Posterior vena cava (tissue), 2 donors: ENCODE measurements at regions of chr12 and their contacts with region 1.

Region 1: DNA sequence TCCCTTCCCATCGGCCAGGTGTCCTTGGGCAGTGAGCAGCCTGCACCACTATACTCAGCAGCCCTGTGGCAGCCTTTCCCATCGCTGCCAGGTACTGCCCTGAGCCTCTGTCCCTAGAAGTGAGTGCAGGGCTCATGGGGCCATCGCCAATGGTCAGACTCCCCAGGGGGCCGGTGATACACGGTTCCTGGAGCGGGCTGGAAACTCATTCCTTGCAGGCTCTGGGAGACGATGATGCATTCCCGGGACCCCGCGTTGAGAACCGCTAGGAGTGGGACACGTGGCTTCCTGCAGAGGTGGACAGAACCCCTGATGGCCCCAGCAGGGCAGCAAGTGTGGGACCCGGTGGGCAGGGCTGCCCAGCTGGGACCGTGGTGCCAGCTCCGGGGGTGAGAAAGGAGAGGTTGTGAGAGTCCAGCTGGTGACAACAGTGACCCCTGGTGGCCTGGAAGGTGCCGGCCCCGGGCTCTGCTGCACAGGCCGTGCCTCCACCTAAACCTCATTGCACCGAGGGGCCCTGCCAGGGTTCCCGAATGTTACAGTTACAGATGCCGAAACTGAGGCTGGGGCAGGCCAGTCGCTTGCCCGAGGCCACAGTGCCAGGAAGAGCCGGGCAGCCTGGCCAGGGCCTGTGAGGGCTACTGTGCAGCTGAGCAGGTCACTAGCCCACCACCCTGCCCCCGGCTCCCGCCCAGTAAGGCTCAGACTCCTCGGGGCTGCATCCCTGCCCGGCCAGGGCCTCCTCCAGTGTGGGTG is 33.8 kb downstream of the FBRSL1 start:
- DNase-seq: peak; percentile 92

Region 2: GRCh38 chr12:132429946-132430643 is 93.7 kb before region 1 on chr12:
- intact Hi-C with region 1: loop called in 1 of 2 experiments (anchors 10 kb)
- DNase-seq: no peak

Region 3: GRCh38 chr12:132505105-132505851 is 18.5 kb before region 1 on chr12:
- intact Hi-C with region 1: loop called in 1 of 2 experiments (anchors 1 kb)
- DNase-seq: no peak

Region 4: DNA sequence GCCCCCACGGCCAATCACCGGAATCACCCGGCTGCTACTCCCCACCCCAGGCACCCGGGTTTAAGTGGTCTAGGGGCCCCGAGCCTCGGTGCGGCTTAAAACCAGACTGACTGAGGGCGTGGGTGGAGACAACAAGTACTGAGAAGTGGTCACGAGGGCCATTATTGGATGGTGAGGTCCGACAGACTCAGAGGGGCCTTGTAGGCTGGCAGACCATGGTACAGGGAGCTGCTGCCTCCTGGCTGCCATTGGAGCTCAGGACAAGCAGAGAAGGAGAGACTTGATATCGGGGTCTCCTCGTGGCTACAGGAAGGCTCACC is 20.3 kb after region 1 on chr12:
- intact Hi-C with region 1: no loop called
- DNase-seq: no peak